ENCODE measurements at regions of chr6 and their contacts with region 1.

Region 1: GRCh38 chr6:90478789-90479602 is 107.9 kb downstream of the MAP3K7 start:
- DNase-seq: peak; percentile 77 to 89
- H3K4me3 ChIP-seq: no peak overlapping the region
- H3K27ac ChIP-seq: no peak overlapping the region
- H3K4me1 ChIP-seq: peaks cover 2 to 11% (median 5%) of the 10 kb centered on the region in 4 experiments; a peak in 4 of 7 replicates
- H3K27me3 ChIP-seq: no peaks in the 10 kb centered on the region
- CTCF ChIP-seq: peak; percentile 70 to 90 (median 84)
- EP300 ChIP-seq: no peak
- POLR2A ChIP-seq: no peak
- RAD21 ChIP-seq: peak; percentile 98 to 99

Region 2: GRCh38 chr6:90216072-90216977 is 262.7 kb before region 1 on chr6:
- CTCF ChIA-PET with region 1: interaction called, 10 read pairs
- POLR2A ChIA-PET with region 1: no interaction called
- DNase-seq: no peak
- H3K4me3 ChIP-seq: 0 out of 8 replicates have a peak overlapping the region, but pooled peaks of 1 of the 4 experiments have one; percentile 0
- H3K27ac ChIP-seq: no peak overlapping the region
- H3K4me1 ChIP-seq: peaks cover 9 to 35% (median 24%) of the 10 kb centered on the region in 4 experiments
- H3K27me3 ChIP-seq: no peaks in the 10 kb centered on the region
- CTCF ChIP-seq: no peak
- EP300 ChIP-seq: no peak
- POLR2A ChIP-seq: no peak
- RAD21 ChIP-seq: no peak

Region 3: DNA sequence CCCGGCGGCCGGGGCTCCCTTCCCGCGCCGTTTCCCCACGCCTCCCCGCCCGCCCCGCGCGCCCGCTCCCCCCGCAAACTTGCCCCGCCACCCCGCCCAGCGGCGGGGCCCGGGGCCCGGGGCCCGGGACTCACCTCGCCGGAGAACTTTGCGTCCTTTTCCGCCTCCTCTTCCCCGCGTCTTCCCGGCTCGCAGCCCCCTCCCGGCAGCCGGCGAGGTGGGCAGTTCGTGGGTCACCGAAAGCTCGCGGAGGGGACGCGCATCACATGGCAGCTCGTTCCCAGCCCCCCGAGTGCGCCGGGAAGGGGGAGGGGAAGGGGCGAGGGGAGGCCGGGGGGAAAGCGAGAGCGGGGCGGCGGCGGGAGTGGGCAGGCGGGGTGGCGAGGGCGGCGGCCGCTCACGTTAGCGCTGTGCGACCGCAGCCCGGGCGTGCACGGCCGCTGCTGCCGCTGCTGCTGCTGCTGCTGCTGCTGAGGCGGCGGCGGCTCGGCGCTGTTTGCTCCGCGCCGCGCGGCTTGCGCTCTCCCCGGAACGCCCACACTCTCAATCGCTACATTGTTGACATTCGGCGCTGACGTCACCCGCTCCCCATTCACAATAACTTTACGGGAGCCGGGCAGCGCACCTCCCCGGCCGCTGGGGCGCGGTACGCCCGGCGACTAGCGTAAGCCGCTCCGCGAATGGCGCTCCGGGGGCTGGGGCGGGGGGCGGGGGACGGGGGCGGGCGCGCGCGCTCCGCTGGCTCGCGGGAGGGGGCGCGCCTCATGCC is 182.5 kb before region 1 on chr6 and contains the start of gene BACH2:
- CTCF ChIA-PET with region 1: interaction called, 234 read pairs
- POLR2A ChIA-PET with region 1: interaction called, 3 read pairs
- DNase-seq: peak; percentile 70 to 93
- H3K4me3 ChIP-seq: peak within 1 kb of the TSS; percentile 44 to 76 (median 73)
- H3K27ac ChIP-seq: peak within 1 kb of the TSS; percentile 70; the same call in 1 of the 2 replicates
- H3K4me1 ChIP-seq: peaks cover 8 to 17% (median 12%) of the 10 kb centered on the region in 4 experiments
- H3K27me3 ChIP-seq: peaks cover 4 to 26% (median 22%) of the 10 kb centered on the region in 4 experiments; a peak in 6 of 7 replicates
- CTCF ChIP-seq: no peak
- EP300 ChIP-seq: no peak
- POLR2A ChIP-seq: peak; percentile 20 to 54; a peak in 2 of 3 replicates
- RAD21 ChIP-seq: no peak; a peak in 1 of 4 replicates
- total RNA-seq, gene BACH2: 5.9 and 8.0 TPM in 2 replicates

Region 4: DNA sequence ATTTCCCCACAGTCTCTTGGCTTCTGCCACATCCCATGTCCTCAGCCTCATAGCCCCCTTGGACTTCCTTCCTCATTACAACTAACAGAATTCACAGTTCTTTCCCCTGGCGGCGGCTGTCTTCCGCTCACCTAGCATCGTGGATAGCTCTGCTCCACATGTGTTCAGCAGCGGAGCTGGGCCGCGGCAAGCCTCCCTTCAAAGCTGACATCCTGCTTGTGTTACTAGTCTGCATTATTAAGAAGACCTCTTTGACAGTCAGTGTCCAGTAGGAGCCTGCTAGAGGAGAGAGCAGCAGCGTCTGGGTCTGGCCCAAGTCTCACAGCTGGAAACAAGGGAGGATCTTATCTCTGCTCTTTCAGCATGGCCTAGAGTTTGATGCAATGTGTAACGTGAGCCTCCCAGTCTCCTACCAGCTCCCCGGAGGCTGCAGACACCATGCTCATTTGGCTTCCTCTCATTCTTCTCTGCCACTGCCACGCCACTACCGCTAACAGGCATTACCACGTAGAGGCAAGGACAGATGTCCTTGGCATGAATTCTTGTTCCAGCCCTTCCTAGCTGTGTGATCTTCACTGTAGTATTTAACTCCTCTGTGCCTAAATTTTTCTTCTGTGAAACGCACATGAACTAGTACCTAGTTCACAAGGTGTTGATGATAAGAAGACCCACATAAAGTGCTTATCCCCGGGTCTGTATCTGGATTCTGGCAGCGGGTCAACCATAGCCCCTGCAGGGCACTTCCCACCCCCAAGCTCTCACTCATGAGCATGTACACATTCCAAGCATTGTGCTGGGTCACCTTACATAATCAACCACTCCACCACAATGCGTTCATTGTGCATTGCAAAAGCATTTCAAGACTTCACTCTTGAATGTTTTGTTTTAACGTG is 75.3 kb before region 1 on chr6:
- CTCF ChIA-PET with region 1: interaction called, 90 read pairs
- POLR2A ChIA-PET with region 1: no interaction called
- DNase-seq: peak in 1 of 2 experiments; percentile 54
- H3K4me3 ChIP-seq: no peak overlapping the region
- H3K27ac ChIP-seq: no peak overlapping the region
- H3K4me1 ChIP-seq: peaks cover 0 to 10% (median 7%) of the 10 kb centered on the region in 4 experiments; a peak in 6 of 7 replicates
- H3K27me3 ChIP-seq: no peaks in the 10 kb centered on the region
- CTCF ChIP-seq: no peak
- EP300 ChIP-seq: no peak
- POLR2A ChIP-seq: no peak
- RAD21 ChIP-seq: no peak

Region 5: GRCh38 chr6:90444160-90444714 is 34.8 kb before region 1 on chr6:
- CTCF ChIA-PET with region 1: interaction called, 179 read pairs
- POLR2A ChIA-PET with region 1: no interaction called
- DNase-seq: no peak
- H3K4me3 ChIP-seq: no peak overlapping the region
- H3K27ac ChIP-seq: no peak overlapping the region
- H3K4me1 ChIP-seq: peaks cover 0 to 14% (median 6%) of the 10 kb centered on the region in 4 experiments; a peak in 4 of 7 replicates
- H3K27me3 ChIP-seq: no peaks in the 10 kb centered on the region
- CTCF ChIP-seq: no peak
- EP300 ChIP-seq: no peak
- POLR2A ChIP-seq: no peak
- RAD21 ChIP-seq: no peak

Region 6: GRCh38 chr6:90493332-90493731 is 14.3 kb after region 1 on chr6:
- CTCF ChIA-PET with region 1: interaction called, 106 read pairs
- POLR2A ChIA-PET with region 1: interaction called, 6 read pairs
- DNase-seq: no peak
- H3K4me3 ChIP-seq: no peak overlapping the region
- H3K27ac ChIP-seq: no peak overlapping the region
- H3K4me1 ChIP-seq: peaks cover 7 to 35% (median 15%) of the 10 kb centered on the region in 4 experiments
- H3K27me3 ChIP-seq: no peaks in the 10 kb centered on the region
- CTCF ChIP-seq: no peak
- EP300 ChIP-seq: no peak
- POLR2A ChIP-seq: no peak
- RAD21 ChIP-seq: no peak